Activated CD4-positive, alpha-beta T cell treated with anti-CD3 and anti-CD28 coated beads for 36 hours (primary cell): ENCODE measurements at regions of chr5 and their contacts with region 1.

Region 1: GRCh38 chr5:174910245-174910737 is 185.9 kb downstream of the MSX2 start:
- DNase-seq: peak; percentile 75
- ATAC-seq: peak; percentile 66
- H3K4me3 Mint-ChIP-seq: no peak overlapping the region
- H3K27ac Mint-ChIP-seq: no peak overlapping the region
- H3K4me1 Mint-ChIP-seq: no peaks in the 10 kb centered on the region
- H3K27me3 Mint-ChIP-seq: peaks cover 35% of the 10 kb centered on the region

Region 2: GRCh38 chr5:174338185-174339010 is 571.9 kb before region 1 on chr5:
- CTCF ChIA-PET with region 1: no interaction called
- POLR2A ChIA-PET with region 1: no interaction called
- intact Hi-C with region 1: no loop called
- DNase-seq: no peak
- ATAC-seq: no peak
- H3K4me3 Mint-ChIP-seq: no peak overlapping the region
- H3K27ac Mint-ChIP-seq: no peak overlapping the region
- H3K4me1 Mint-ChIP-seq: no peaks in the 10 kb centered on the region
- H3K27me3 Mint-ChIP-seq: peaks cover 20% of the 10 kb centered on the region

Region 3: DNA sequence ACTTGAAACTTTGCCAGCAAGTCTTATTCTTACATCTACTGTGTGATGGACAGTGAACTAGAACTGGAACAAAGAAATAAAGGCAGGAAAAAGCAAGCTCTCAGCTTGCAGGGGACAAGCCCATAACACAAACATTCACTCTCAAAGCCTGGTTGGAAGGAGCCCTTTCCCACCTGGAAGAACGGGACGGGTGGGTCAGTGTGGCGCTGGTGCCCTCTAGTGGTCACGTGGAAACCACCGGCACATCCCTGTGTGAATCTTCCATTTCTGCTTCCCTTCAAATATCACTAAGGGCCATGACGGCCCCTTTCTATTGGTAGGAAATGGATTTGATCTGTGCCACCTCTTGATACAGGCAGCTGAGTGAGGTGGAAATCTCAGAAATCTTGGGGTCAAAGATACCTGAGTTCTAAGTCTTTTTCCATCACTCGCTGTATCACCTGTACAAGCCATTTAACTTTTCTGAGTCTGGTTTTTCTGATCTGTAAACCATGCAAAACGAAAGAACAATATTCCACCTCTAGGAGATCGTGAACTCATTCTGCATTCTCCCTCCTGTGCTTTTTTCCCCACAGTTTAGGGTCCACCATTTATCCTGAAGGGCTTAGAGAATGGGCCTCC is 25.7 kb after region 1 on chr5:
- CTCF ChIA-PET with region 1: interaction called, 3 read pairs
- POLR2A ChIA-PET with region 1: no interaction called
- intact Hi-C with region 1: loop called (anchors 1 kb)
- DNase-seq: peak; percentile 60
- ATAC-seq: no peak
- H3K4me3 Mint-ChIP-seq: no peak overlapping the region
- H3K27ac Mint-ChIP-seq: no peak overlapping the region
- H3K4me1 Mint-ChIP-seq: no peaks in the 10 kb centered on the region
- H3K27me3 Mint-ChIP-seq: peaks cover 21% of the 10 kb centered on the region

Region 4: DNA sequence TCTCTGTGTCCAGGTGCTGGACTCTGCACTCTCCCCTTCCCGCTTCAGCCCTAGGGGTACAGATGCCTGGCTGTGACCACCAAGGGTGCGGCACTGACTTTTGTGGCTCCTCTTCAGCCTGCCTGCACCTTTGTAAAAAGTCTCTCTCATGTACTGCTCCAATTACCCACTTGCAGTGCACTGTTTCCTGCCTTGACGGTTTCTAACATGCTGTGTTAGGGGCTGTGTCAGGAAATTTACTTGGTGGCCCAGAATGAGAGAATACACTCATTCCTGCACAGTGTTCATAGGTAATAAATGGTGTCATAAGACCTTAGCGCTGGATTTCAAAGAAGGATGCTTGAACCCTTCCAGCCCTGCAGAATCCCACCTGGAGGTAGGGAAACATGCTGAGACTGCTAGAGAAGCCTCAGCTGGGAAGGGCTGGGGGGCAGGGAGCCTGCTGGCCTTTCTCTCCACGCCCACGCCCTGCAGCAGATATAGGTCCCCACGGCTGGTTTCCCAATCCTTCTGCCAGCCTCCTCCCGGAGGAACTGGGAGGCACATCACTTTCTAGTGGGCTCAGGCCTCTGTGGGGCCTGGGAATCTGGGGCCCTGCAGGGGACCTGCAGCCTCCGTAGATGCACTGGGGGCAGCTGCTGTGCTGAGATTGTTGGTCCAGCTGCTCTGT is 730.0 kb after region 1 on chr5:
- CTCF ChIA-PET with region 1: no interaction called
- POLR2A ChIA-PET with region 1: no interaction called
- intact Hi-C with region 1: no loop called
- DNase-seq: no peak
- ATAC-seq: peak; percentile 74
- H3K4me3 Mint-ChIP-seq: no peak overlapping the region
- H3K27ac Mint-ChIP-seq: peak overlapping the region; percentile 69
- H3K4me1 Mint-ChIP-seq: peaks cover 32% of the 10 kb centered on the region
- H3K27me3 Mint-ChIP-seq: no peaks in the 10 kb centered on the region